ENCODE measurements at regions of chr21 and their contacts with region 1.

Region 1: DNA sequence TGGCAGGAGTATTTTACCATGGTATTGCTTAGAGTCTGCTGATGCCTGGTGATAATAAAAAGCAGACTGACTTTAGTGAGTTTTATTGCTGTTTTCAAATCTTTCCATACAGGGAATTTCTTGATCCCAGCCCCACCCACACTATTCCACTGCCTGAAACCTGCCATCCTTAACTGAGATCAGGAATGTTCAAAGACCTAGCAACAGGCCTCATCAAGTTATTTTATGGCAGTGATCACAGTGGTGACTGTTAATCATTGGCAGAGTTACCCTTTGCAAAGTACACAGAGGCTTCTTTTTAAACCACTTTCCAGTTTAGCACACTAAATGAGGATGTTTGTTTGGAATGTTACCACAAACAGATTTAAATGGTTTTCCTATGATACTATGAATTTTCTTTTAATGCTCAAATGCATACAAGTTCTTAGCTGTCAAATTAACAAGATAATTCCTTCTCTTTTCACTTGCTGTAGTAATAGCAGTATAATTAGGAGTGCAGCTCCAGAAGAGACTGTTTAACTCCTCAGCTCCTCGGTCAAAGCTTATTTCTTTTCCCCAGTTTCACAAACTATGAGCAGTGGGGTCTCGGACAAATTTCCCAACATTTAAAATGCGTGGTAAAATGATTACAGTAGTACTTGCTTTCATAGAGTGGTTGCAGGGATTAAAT is 69.9 kb upstream of the USP25 start:
- DNase-seq: no peak
- ATAC-seq: no peak
- H3K4me3 ChIP-seq: no peak overlapping the region
- H3K27ac ChIP-seq: no peak overlapping the region
- H3K4me1 ChIP-seq: no peaks in the 10 kb centered on the region
- H3K27me3 ChIP-seq: no peaks in the 10 kb centered on the region
- CTCF ChIP-seq: no peak
- EP300 ChIP-seq: no peak
- POLR2A ChIP-seq: no peak
- RAD21 ChIP-seq: no peak

Region 2: DNA sequence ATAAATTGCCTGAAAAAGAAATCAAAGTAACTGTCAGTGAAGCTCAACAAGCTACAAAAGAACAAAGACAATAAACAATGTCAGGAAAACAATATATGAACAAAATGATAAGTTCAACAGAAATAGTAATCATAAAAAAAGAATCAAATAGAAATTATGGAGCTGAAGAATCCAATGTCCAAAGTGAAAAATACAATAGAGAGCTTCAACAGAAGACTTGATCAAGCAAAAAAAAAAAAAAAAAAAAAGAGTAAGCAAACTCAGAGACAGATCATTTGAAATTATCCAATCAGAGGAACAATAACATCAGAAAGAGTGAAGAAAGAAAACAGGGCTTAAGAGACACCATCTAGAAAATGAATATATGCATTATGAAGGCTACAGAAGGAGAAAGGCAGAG is 862.3 kb before region 1 on chr21:
- CTCF ChIA-PET with region 1: no interaction called
- POLR2A ChIA-PET with region 1: no interaction called
- RAD21 ChIA-PET with region 1: no interaction called
- SMC1A ChIA-PET with region 1: no interaction called
- in situ Hi-C with region 1: no loop called
- intact Hi-C with region 1: no loop called
- DNase-seq: no peak
- ATAC-seq: no peak
- H3K4me3 ChIP-seq: no peak overlapping the region
- H3K27ac ChIP-seq: no peak overlapping the region
- H3K4me1 ChIP-seq: no peaks in the 10 kb centered on the region
- H3K27me3 ChIP-seq: no peaks in the 10 kb centered on the region
- CTCF ChIP-seq: no peak
- EP300 ChIP-seq: no peak
- POLR2A ChIP-seq: no peak
- RAD21 ChIP-seq: no peak

Region 3: GRCh38 chr21:15713412-15713811 is 53.5 kb after region 1 on chr21:
- CTCF ChIA-PET with region 1: no interaction called
- POLR2A ChIA-PET with region 1: no interaction called
- RAD21 ChIA-PET with region 1: no interaction called
- SMC1A ChIA-PET with region 1: no interaction called
- in situ Hi-C with region 1: loop called (anchors 10 kb)
- intact Hi-C with region 1: no loop called
- DNase-seq: no peak
- ATAC-seq: no peak
- H3K4me3 ChIP-seq: no peak overlapping the region
- H3K27ac ChIP-seq: no peak overlapping the region
- H3K4me1 ChIP-seq: no peaks in the 10 kb centered on the region
- H3K27me3 ChIP-seq: no peaks in the 10 kb centered on the region
- CTCF ChIP-seq: no peak
- EP300 ChIP-seq: no peak
- POLR2A ChIP-seq: no peak
- RAD21 ChIP-seq: no peak